Ascending aorta (tissue), 2 donors: ENCODE measurements at regions of chr6 and their contacts with region 1.

Region 1: GRCh38 chr6:75601304-75602245 is at the start of gene SENP6:
- DNase-seq: peak; percentile 18 to 85
- H3K4me3 ChIP-seq: peak within 1 kb of the TSS; percentile 91 to 94
- H3K27ac ChIP-seq: peak within 1 kb of the TSS; percentile 98 to 99
- H3K4me1 ChIP-seq: peaks cover 5 to 22% of the 10 kb centered on the region in 2 donors
- H3K27me3 ChIP-seq: no peaks in the 10 kb centered on the region
- CTCF ChIP-seq: no peak
- total RNA-seq, gene SENP6: 24.4 TPM

Region 2: DNA sequence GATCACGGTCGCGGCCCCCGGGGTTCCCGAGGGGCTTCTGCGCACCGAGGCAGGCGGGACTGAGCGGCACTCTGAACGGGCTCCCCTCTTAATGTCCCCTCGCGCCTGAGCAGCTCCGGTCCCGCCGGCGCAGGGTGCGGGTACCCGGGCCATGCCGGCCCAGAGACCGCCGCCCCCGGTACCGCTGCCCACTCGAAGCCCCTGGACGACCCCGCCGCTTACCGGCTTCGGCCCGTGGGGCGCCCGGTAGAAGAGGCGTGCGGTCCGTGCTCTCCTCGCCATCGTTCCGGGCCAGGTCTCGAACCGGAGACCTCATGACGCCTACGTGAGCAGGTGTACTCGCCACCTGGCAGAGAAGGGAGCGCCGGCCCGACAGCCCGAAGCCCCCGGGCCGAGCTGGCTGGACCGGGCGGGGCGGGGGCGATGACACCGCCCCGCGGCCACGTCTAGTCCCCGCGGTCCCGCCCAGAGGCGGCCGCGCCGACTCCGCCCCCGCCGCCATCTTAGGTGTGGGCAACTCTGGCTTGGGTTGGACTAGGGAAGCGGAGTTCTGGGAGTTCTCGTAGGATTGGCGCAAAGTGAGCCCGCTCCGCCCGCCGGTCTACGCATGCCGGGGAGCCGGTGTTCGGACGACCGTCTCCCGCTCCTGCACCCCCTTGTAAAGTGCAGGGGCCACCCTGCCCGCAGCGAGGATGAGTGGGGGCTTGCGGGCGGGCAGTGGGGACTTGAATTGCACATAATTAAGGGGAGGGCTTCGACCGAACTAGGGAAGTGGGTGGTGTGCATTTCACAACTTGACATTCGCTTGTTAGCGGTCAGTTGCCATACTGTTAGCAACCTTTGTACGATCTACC is 1947.8 kb before region 1 on chr6 and contains the start of gene SLC17A5:
- intact Hi-C with region 1: loop called (anchors 10 kb)
- DNase-seq: peak; percentile 88 to 98
- H3K4me3 ChIP-seq: peak within 1 kb of the TSS; percentile 91 to 100
- H3K27ac ChIP-seq: peak within 1 kb of the TSS; percentile 97 to 98
- H3K4me1 ChIP-seq: peaks cover 0 to 4% of the 10 kb centered on the region in 2 donors
- H3K27me3 ChIP-seq: no peaks in the 10 kb centered on the region
- CTCF ChIP-seq: no peak
- total RNA-seq, gene SLC17A5: 23.2 TPM

Region 3: GRCh38 chr6:75098709-75099108 is 502.9 kb before region 1 on chr6:
- intact Hi-C with region 1: loop called (anchors 10 kb)
- DNase-seq: peak; percentile 10 to 85
- H3K4me3 ChIP-seq: no peak overlapping the region
- H3K27ac ChIP-seq: peak overlapping the region; percentile 38 to 65
- H3K4me1 ChIP-seq: peaks cover 3 to 17% of the 10 kb centered on the region in 2 donors
- H3K27me3 ChIP-seq: no peaks in the 10 kb centered on the region
- CTCF ChIP-seq: no peak

Region 4: DNA sequence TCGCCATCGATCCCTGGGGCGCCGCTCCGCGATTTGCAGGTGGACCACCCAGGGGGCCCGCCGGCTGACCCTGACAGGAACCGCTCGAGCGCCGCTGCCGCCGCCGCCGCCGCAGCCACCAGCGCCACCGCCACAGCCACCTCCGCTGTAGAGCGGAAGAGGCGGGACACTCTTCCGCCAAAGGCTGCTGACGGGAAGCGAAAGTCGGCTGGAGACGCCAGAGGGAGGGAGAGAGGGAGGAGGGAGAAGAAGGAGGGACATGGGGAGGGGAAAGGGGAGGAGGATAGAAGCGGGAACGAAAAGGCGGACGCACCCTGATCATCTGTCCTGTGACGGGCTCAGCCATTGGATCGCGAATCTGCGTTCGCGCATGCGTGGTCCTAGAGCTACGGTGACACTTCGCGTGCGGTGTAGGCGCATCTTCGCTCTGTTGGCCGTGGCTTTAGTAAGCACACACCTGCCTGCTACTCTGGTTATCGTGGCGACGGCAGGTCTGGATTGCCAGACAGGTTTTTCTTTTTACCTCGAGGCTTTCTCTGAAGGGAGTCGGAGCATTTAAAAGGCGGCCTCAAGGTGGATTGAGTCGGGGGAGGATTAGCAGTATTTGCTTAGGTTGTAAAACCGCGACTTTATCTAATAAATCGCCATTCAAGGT is 316.8 kb before region 1 on chr6 and contains the start of gene TMEM30A:
- intact Hi-C with region 1: loop called (anchors 5 kb)
- DNase-seq: peak; percentile 88 to 98
- H3K4me3 ChIP-seq: peak within 1 kb of the TSS; percentile 93 to 97
- H3K27ac ChIP-seq: peak within 1 kb of the TSS; percentile 85 to 95
- H3K4me1 ChIP-seq: peaks cover 3 to 17% of the 10 kb centered on the region in 2 donors
- H3K27me3 ChIP-seq: no peaks in the 10 kb centered on the region
- CTCF ChIP-seq: no peak
- total RNA-seq, gene TMEM30A: 54.8 TPM

Region 5: DNA sequence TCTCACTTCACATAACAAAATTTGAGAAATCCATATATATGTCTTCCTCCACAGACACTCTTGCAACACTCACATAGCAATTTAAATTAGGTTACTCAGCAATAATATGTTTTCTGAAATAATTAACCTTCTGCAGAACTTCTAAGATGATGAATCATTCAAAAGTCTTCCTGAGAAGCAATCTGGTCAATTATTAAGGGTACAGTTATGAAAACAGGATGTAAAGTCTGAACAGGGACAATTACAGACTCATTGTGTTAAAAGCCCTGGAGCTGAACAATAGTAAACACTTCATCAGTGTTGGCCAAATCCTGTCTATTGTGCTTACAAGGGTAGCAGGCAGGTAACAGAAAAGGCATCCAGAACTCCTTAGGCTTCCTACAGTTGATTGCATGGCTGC is 183.3 kb before region 1 on chr6:
- intact Hi-C with region 1: loop called (anchors 10 kb)
- DNase-seq: no peak
- H3K4me3 ChIP-seq: no peak overlapping the region
- H3K27ac ChIP-seq: no peak overlapping the region
- H3K4me1 ChIP-seq: peaks cover 25 to 47% of the 10 kb centered on the region in 2 donors
- H3K27me3 ChIP-seq: no peaks in the 10 kb centered on the region
- CTCF ChIP-seq: no peak